Gastrocnemius medialis (tissue), 4 donors: ENCODE measurements at regions of chr13 and their contacts with region 1.

Region 1: DNA sequence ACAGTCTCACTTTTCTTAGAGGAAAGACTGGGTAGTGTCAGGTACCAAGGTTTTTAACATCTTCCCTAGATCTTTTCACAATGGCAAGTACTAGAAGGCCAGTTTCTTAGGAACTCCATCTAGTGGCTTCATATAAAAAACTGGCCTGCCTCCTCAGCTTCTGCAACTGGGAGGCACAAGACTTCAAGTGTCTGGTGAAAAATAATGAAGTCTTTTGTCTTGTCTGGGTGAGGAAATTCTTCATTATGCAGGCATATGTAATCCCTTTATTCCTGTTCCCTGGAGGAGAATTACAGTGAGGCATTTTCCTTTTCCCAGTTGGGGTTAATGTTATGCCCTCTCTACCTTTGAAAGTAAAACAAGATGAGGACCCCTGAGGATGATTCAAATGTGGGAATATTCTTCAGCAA is 300.5 kb downstream of the NALCN start:
- DNase-seq: no peak
- ATAC-seq: no peak
- H3K4me3 ChIP-seq: no peak overlapping the region
- H3K27ac ChIP-seq: no peak overlapping the region
- H3K4me1 ChIP-seq: no peaks in the 10 kb centered on the region
- H3K27me3 ChIP-seq: no peaks in the 10 kb centered on the region
- CTCF ChIP-seq: no peak
- POLR2A ChIP-seq: no peak

Region 2: DNA sequence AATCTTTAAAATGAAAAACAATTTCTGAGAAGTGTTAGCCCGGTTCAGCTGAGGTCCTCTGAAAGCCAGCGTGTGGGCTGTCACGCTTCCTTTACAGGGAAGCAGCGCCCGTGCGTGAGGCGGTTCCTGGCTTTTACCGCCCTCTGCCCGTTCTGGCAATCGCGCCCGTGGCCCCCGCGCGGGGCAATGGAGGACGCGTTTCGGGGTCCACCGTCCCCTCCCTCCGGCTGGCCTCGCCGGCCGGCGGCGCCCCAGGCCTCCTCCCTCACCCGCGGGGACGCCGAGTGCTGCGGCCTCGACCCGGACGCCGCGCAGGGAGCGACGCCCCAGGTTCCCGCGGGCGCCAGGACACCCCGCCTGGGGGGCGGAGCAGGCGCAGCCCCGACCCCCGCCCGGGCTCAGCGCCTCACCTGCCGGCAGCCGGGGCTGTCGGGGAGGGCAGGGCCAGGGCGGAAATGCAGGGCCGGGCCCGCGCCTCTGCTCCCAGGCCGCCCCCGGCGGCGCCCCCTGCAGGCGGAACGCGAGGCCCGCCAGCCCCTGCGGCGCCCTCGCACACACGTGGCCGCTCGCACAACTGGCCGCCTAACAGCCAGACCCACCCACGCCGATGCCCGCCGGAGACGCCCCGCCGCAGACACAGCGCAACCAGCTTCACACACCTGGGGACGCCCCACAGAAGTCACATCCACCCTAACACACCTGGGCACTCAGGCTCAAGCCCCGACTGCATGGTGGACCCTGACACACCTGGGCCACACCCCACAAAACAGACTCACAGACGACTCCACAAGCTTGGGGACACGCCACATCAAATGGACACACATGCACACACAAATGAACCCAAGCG is 527.2 kb before region 1 on chr13 and contains the start of gene GGACT:
- in situ Hi-C with region 1: loop called in 1 of 4 experiments (anchors 25 kb)
- intact Hi-C with region 1: no loop called
- DNase-seq: peak in 1 of 2 donors; percentile 32
- ATAC-seq: peak; percentile 82 to 94
- H3K4me3 ChIP-seq: peak within 1 kb of the TSS; percentile 55 to 72 (median 63)
- H3K27ac ChIP-seq: peak within 1 kb of the TSS; percentile 51 to 74 (median 64)
- H3K4me1 ChIP-seq: peaks cover 6% of the 10 kb centered on the region in 2 donors
- H3K27me3 ChIP-seq: no peaks in the 10 kb centered on the region
- CTCF ChIP-seq: peak; percentile 43 to 78 (median 72)
- POLR2A ChIP-seq: no peak
- total RNA-seq, gene GGACT: 0.56 to 1.5 (median 0.83) TPM